Naive thymus-derived CD4-positive, alpha-beta T cell (primary cell): ENCODE measurements at regions of chr20 and their contacts with region 1.

Region 1: DNA sequence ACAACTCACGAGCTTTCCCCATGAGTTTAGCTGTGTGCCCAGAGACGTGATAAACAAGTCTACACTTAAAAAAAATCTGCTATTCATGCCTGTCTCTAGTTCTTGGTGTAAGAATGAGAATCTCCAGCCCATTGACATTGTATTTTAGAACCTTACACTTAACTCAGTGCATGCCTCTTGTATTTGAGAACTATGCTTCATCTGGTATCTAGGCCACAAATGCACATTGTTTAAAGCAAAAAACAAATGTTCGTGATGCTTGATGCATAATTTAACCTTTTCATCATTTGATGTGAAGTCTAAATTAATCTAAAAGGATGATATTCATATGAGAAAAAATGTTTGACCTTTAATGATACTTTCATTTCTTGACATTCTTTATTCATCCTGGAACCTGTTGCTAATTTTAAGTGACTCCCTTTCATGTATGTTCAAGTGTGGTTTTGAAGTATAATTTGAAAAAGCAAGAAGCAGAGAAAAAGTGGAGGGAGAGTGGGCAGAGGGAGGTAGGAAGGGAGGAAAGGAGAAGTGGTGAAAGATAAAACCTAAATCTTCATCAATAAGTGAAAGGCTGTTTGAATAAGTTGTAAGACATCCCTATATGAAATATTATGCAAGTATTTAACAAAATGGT is 116.9 kb downstream of the PFDN4 start:
- DNase-seq: no peak
- ATAC-seq: no peak
- H3K4me3 ChIP-seq: no peak overlapping the region
- H3K4me3 Mint-ChIP-seq: no peak overlapping the region
- H3K27ac ChIP-seq: no peak overlapping the region
- H3K27ac Mint-ChIP-seq: peak overlapping the region in 1 of 9 donors; percentile 1
- H3K4me1 ChIP-seq: no peaks in the 10 kb centered on the region
- H3K4me1 Mint-ChIP-seq: peaks cover 0 to 14% (median 0%) of the 10 kb centered on the region in 7 donors
- H3K27me3 ChIP-seq: no peaks in the 10 kb centered on the region
- H3K27me3 Mint-ChIP-seq: peaks cover 0 to 17% (median 11%) of the 10 kb centered on the region in 5 donors

Region 2: GRCh38 chr20:54284934-54285704 is 39.6 kb before region 1 on chr20:
- CTCF ChIA-PET with region 1: no interaction called
- POLR2A ChIA-PET with region 1: no interaction called
- intact Hi-C with region 1: loop called in 1 of 2 experiments (anchors 1 kb)
- DNase-seq: no peak
- ATAC-seq: no peak
- H3K4me3 ChIP-seq: no peak overlapping the region
- H3K4me3 Mint-ChIP-seq: peak overlapping the region in 1 of 10 donors; percentile 23
- H3K27ac ChIP-seq: no peak overlapping the region
- H3K27ac Mint-ChIP-seq: peak overlapping the region in 1 of 9 donors; percentile 76
- H3K4me1 ChIP-seq: no peaks in the 10 kb centered on the region
- H3K4me1 Mint-ChIP-seq: peaks cover 0 to 10% (median 0%) of the 10 kb centered on the region in 7 donors
- H3K27me3 ChIP-seq: no peaks in the 10 kb centered on the region
- H3K27me3 Mint-ChIP-seq: peaks cover 0 to under 1% (median 0%) of the 10 kb centered on the region in 5 donors